MCF 10A (cell line): ENCODE measurements at regions of chr6 and their contacts with region 1.

Region 1: GRCh38 chr6:19851241-19852089 is 14.3 kb downstream of the ID4 start:
- DNase-seq: peak; percentile 66
- H3K4me3 Mint-ChIP-seq: no peak overlapping the region
- H3K27ac Mint-ChIP-seq: no peak overlapping the region
- H3K4me1 Mint-ChIP-seq: peaks cover 4% of the 10 kb centered on the region
- H3K27me3 Mint-ChIP-seq: peaks cover 10% of the 10 kb centered on the region
- CTCF ChIP-seq: peak; percentile 76

Region 2: DNA sequence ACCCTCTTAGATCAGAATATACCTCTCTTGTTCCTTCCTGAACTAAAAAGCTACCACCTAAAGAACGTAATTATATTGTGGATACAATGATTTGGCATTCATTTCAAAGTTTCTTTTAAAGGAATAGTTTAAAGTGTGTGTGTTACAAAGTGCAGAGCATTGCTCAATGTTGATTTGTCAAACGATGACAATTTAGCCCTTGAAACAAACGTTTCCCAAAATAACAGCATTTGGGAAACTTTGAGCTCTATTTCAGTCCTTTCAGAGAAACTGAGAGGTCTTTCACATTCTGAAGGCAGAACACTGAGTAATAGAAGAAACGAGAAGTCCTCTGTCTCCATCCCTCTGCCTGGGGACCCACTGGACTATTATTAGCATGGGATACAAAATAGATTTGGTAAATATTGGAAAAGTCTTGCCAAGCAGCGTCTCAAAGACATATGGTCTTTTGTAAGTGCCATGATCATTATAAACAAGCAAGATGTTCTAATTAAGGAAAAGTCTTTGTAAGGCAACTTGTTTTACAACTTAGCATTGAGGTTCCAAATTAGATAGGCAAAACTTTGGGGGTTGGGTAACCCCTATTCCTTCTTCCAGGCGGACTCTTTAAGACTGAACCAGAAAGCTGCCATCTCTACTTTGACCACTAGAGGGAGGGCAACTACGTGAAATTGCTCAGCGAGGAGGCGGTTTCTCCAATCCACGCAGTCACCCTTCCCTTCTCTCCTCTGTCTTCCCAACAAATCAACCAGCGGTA is 1255.5 kb before region 1 on chr6:
- CTCF ChIA-PET with region 1: interaction called, 5 read pairs
- POLR2A ChIA-PET with region 1: no interaction called
- intact Hi-C with region 1: loop called (anchors 5 kb)
- DNase-seq: peak; percentile 73
- H3K4me3 Mint-ChIP-seq: no peak overlapping the region
- H3K27ac Mint-ChIP-seq: no peak overlapping the region
- H3K4me1 Mint-ChIP-seq: no peaks in the 10 kb centered on the region
- H3K27me3 Mint-ChIP-seq: peaks cover 41% of the 10 kb centered on the region
- CTCF ChIP-seq: peak; percentile 86

Region 3: DNA sequence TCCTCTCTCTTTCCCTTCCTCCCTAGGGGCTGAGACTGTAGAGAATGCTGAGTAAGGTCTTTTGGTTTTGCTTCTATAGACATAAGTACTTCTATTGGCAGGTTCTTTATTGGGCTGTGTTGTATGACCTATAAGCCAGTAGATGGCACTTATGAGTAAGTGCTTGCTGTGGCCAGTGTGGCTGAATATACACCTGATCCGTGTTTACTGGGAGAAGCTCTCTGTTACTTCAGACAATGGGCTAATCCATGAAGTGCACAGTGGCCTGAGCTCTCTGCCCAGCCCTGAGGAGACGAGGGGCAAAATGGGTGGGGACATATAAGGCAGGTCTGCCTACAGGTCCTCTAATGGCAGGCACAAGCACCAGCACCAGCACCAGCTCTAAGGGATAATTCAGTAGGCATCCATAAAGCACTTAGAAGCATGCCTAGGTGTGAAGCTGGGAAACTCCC is 854.1 kb before region 1 on chr6:
- CTCF ChIA-PET with region 1: interaction called, 12 read pairs
- POLR2A ChIA-PET with region 1: no interaction called
- intact Hi-C with region 1: loop called (anchors 1 kb)
- DNase-seq: peak; percentile 64
- H3K4me3 Mint-ChIP-seq: no peak overlapping the region
- H3K27ac Mint-ChIP-seq: no peak overlapping the region
- H3K4me1 Mint-ChIP-seq: no peaks in the 10 kb centered on the region
- H3K27me3 Mint-ChIP-seq: peaks cover 61% of the 10 kb centered on the region
- CTCF ChIP-seq: peak; percentile 74

Region 4: DNA sequence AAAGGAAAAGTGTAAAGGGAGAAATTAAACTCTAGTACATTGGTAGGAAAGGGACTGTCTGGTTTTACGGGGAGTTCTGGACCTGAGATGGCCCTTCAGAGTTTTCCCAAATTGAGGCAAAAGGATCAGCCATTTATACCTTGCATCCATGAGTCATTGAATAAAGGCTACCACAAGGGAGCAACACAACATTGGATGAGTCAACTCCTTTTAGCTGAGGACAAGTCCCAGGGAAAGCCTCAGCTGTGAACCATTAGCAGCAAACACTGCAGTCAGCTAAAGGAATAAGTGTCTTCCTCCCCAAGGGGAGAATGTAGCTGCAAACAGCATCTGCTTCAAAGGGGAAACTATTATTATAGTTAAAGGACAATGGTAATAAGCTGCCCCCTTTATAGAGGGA is 483.0 kb before region 1 on chr6:
- CTCF ChIA-PET with region 1: interaction called, 4 read pairs
- POLR2A ChIA-PET with region 1: no interaction called
- intact Hi-C with region 1: loop called (anchors 1 kb)
- DNase-seq: peak; percentile 65
- H3K4me3 Mint-ChIP-seq: no peak overlapping the region
- H3K27ac Mint-ChIP-seq: no peak overlapping the region
- H3K4me1 Mint-ChIP-seq: no peaks in the 10 kb centered on the region
- H3K27me3 Mint-ChIP-seq: peaks cover 21% of the 10 kb centered on the region
- CTCF ChIP-seq: peak; percentile 19

Region 5: DNA sequence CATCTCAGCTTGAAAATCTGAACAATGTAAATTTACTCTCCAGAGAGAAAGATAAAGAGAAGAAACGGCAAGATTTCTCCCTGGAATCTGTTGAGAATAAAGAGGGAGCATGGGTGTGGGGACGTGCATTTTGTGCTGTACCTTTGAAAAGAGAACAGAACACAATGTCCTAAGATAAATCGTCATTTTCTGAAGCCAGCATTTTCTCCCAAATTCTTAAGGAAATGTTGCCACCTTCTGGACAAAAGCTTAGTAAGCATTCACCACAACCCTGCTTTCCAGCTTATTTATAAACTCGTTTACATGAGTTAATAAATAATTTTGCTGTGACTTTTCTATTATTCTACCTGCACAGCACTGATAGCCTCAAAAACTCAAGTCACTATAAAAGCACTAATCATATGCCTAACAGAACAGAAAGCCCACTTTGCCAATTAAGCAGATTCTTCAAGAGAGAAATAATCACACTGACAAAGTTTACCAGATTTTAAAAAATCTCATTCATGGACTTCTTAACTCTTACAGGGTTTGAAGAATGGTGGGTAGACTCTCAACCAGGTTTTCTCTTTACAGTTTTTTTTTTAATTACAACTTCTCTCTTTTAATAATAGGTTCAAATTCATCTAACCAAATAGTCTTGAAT is 205.0 kb after region 1 on chr6:
- CTCF ChIA-PET with region 1: interaction called, 3 read pairs
- POLR2A ChIA-PET with region 1: no interaction called
- intact Hi-C with region 1: loop called (anchors 10 kb)
- DNase-seq: peak; percentile 48
- H3K4me3 Mint-ChIP-seq: no peak overlapping the region
- H3K27ac Mint-ChIP-seq: no peak overlapping the region
- H3K4me1 Mint-ChIP-seq: no peaks in the 10 kb centered on the region
- H3K27me3 Mint-ChIP-seq: no peaks in the 10 kb centered on the region
- CTCF ChIP-seq: peak; percentile 54